GM13977 (cell line): ENCODE measurements at regions of chr15 and their contacts with region 1.

Region 1: DNA sequence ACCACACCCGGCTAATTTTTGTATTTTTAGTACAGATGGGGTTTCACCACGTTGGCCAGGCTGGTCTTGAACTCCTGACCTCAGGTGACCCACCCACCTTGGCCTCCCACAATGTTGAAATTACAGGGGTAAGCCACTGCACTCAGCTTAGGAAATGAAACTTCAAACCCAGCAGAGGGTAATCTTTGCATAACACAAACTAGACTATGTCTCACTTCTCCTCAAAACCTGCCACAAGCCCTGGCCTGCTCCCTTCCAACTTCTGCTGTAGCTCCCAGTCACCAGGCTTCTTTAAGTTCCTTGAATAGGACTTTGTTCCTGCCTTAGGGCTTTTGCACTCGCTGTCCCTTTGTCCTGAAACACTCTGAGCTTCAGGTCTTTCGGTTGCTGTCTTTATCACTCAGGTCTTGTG is 39.2 kb upstream of the SEMA4B start:
- DNase-seq: no peak
- CTCF ChIP-seq: peak; percentile 15

Region 2: GRCh38 chr15:90219421-90220166 is 57.6 kb after region 1 on chr15:
- in situ Hi-C with region 1: loop called (anchors 5 kb)
- DNase-seq: peak; percentile 71
- CTCF ChIP-seq: peak; percentile 68

Region 3: GRCh38 chr15:90320061-90320884 is 158.3 kb after region 1 on chr15:
- in situ Hi-C with region 1: no loop called
- DNase-seq: peak; percentile 84
- CTCF ChIP-seq: peak; percentile 95